CD8-positive, alpha-beta T cell (primary cell): ENCODE measurements at regions of chr10 and their contacts with region 1.

Region 1: GRCh38 chr10:96565774-96566173 is 21.0 kb downstream of the TM9SF3 start:
- DNase-seq: no peak
- ATAC-seq: no peak
- H3K4me3 ChIP-seq: no peak overlapping the region
- H3K4me3 Mint-ChIP-seq: no peak overlapping the region
- H3K27ac ChIP-seq: no peak overlapping the region
- H3K27ac Mint-ChIP-seq: no peak overlapping the region
- H3K4me1 ChIP-seq: no peaks in the 10 kb centered on the region
- H3K4me1 Mint-ChIP-seq: peaks cover 43% of the 10 kb centered on the region
- H3K27me3 ChIP-seq: no peaks in the 10 kb centered on the region
- H3K27me3 Mint-ChIP-seq: no peaks in the 10 kb centered on the region
- CTCF ChIP-seq: no peak

Region 2: DNA sequence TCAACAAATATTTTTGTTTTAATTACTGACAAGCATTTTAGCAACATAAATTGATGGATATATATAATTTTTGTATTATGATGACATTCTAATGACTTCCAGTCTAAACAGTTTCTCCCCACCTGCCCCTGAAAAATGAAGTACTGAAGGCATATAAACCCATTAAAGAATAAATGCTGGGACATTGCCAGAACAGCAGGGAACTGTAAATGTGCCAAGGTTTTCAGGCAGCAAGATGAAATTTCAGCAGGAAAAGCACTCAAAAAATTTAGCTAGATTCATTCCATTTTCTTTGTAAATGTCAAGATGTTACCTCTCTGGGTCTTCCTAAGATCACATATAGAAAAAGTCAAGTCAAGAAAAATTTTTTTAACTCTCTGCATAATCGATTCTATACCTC is 41.0 kb before region 1 on chr10:
- CTCF ChIA-PET with region 1: no interaction called
- POLR2A ChIA-PET with region 1: no interaction called
- intact Hi-C with region 1: loop called in 1 of 2 experiments (anchors 5 kb)
- DNase-seq: no peak
- ATAC-seq: no peak
- H3K4me3 ChIP-seq: no peak overlapping the region
- H3K4me3 Mint-ChIP-seq: no peak overlapping the region
- H3K27ac ChIP-seq: no peak overlapping the region
- H3K27ac Mint-ChIP-seq: no peak overlapping the region
- H3K4me1 ChIP-seq: no peaks in the 10 kb centered on the region
- H3K4me1 Mint-ChIP-seq: no peaks in the 10 kb centered on the region
- H3K27me3 ChIP-seq: no peaks in the 10 kb centered on the region
- H3K27me3 Mint-ChIP-seq: no peaks in the 10 kb centered on the region
- CTCF ChIP-seq: no peak

Region 3: GRCh38 chr10:96577069-96577468 is 11.3 kb after region 1 on chr10:
- CTCF ChIA-PET with region 1: no interaction called
- POLR2A ChIA-PET with region 1: no interaction called
- intact Hi-C with region 1: no loop called
- DNase-seq: no peak
- ATAC-seq: no peak
- H3K4me3 ChIP-seq: no peak overlapping the region
- H3K4me3 Mint-ChIP-seq: no peak overlapping the region
- H3K27ac ChIP-seq: no peak overlapping the region
- H3K27ac Mint-ChIP-seq: no peak overlapping the region
- H3K4me1 ChIP-seq: peaks cover 43% of the 10 kb centered on the region
- H3K4me1 Mint-ChIP-seq: peaks cover 80% of the 10 kb centered on the region
- H3K27me3 ChIP-seq: no peaks in the 10 kb centered on the region
- H3K27me3 Mint-ChIP-seq: no peaks in the 10 kb centered on the region
- CTCF ChIP-seq: no peak

Region 4: DNA sequence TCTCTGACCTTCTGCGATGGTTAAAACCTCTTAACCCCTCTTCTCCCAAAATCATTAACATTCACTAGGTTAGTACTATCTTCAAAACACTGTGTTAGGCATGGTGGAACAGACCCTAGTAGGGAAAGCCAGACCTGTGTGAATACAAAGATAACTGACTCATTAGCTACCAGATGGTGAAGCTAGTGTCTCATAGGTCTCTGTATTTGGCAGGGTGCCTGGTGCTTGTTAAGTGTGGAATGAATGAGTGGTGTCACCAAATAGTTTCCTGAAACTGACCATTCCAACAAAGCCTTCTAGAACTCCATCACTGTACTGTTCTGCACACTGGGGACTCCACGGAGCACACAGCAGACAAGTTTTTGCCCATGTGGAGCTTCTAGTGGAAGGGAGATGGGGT is 48.7 kb after region 1 on chr10:
- CTCF ChIA-PET with region 1: no interaction called
- POLR2A ChIA-PET with region 1: no interaction called
- intact Hi-C with region 1: no loop called
- DNase-seq: no peak
- ATAC-seq: no peak
- H3K4me3 ChIP-seq: no peak overlapping the region
- H3K4me3 Mint-ChIP-seq: no peak overlapping the region
- H3K27ac ChIP-seq: no peak overlapping the region
- H3K27ac Mint-ChIP-seq: no peak overlapping the region
- H3K4me1 ChIP-seq: peaks cover 16% of the 10 kb centered on the region
- H3K4me1 Mint-ChIP-seq: peaks cover 14% of the 10 kb centered on the region
- H3K27me3 ChIP-seq: no peaks in the 10 kb centered on the region
- H3K27me3 Mint-ChIP-seq: no peaks in the 10 kb centered on the region
- CTCF ChIP-seq: no peak